Left ventricle myocardium superior (tissue), 1 donor: ENCODE measurements at regions of chr15 and their contacts with region 1.

Region 1: DNA sequence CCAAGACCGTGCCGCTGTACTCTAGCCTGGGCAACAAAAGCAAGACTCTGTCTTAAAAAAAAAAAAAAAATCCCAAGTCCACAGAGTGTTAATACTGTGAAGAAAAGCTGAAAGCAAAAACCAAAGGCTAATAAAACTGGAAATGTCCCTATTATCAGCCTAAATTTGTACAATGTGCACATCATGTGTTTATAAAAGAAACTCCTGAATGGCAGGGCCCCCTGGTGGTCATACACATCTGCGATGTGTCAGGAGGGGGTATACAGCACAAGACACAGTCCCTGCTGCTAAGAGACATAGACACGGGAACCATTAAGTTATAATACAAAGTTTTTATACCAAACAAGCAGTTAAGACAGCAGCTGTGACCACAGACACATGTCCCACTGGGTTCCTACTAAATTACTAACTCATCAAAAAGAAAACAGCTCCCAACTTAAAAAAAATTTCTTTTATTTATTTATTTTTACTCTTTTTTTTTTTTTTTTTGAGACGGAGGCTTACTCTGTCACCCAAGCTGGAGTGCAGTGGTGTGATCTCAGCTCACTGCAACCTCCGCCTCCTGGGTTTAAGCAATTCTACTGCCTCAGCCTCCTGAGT is 31.0 kb downstream of the IDH2 start:
- DNase-seq: peak; percentile 86
- ATAC-seq: peak; percentile 72

Region 2: GRCh38 chr15:89893696-89894455 is 177.4 kb before region 1 on chr15 and contains the start of gene AP3S2:
- intact Hi-C with region 1: loop called (anchors 10 kb)
- DNase-seq: peak; percentile 92
- ATAC-seq: peak; percentile 99
- total RNA-seq, gene AP3S2: 46.6 TPM

Region 3: DNA sequence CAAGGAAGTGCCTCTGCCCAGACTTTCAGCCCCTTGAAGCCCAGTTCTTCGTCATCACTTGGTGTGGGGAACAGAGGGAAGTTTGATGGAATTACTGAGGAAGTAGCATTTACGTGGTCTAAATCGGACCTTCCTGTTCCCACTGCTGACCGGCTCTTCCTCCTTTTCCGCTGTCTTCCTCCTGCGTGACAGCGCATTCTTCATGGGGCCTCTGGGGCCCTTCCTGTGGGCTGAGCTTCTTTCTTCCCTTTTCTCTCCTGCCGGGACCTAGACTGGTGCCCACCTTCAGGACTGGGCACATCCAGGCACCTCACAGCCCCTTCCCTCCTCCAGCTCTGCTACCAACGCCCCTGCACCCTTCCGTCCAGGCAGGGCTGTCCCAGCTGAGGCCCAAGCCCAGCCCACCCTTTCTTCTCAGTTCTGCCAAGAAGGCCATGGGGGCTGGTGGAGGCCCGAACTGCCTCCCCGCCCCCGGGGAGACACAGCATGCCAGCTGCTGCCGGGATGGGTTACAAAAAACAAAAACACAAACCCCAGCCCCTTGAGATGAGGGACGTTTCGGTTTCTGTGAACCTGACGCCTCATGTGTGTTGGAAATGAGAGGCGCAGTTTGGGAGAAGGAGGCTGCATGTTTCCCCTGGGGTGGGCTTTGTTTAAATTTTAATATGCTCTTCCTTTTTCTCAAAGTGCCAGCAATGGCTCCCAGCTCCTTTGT is 51.1 kb before region 1 on chr15:
- intact Hi-C with region 1: no loop called
- DNase-seq: no peak
- ATAC-seq: peak; percentile 78

Region 4: GRCh38 chr15:90114451-90114901 is 43.2 kb after region 1 on chr15:
- intact Hi-C with region 1: no loop called
- DNase-seq: no peak
- ATAC-seq: no peak